Common myeloid progenitor, CD34-positive (primary cell): ENCODE measurements at regions of chr7 and their contacts with region 1.

Region 1: GRCh38 chr7:55534175-55534915 is 38.0 kb downstream of the VOPP1 start:
- DNase-seq: peak; percentile 59 to 95 (median 94)
- H3K4me3 ChIP-seq: peak overlapping the region in 1 of 7 experiments; percentile 18
- H3K27ac ChIP-seq: peak overlapping the region in 1 of 2 experiments; percentile 70
- H3K4me1 ChIP-seq: peaks cover 10 to 65% (median 52%) of the 10 kb centered on the region in 4 experiments
- H3K27me3 ChIP-seq: no peaks in the 10 kb centered on the region

Region 2: DNA sequence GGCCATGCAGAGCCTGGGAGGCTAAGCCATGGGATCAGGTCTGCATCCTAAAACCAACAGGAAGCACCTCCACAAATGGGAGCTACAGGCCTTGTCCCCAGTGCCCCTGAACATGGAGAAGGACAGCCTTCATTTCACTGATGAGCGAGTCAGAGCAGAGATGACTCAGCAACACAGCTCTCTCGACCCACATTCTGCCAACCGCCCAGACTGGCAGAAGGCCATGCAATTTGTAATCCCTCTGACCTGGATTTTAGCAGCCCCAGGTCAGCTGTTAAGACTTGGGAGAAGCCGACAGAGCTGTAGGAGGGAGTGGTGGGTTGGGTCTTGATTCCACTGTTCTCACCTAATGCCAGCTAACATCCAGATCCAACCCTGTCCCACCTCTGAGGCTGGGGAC is 12.5 kb after region 1 on chr7:
- CTCF ChIA-PET with region 1: interaction called, 28 read pairs
- POLR2A ChIA-PET with region 1: interaction called, 9 read pairs
- DNase-seq: peak; percentile 62 to 93 (median 92)
- H3K4me3 ChIP-seq: peak overlapping the region in 1 of 7 experiments; percentile 12
- H3K27ac ChIP-seq: no peak overlapping the region
- H3K4me1 ChIP-seq: peaks cover 0 to 21% (median 10%) of the 10 kb centered on the region in 4 experiments
- H3K27me3 ChIP-seq: no peaks in the 10 kb centered on the region